ENCODE measurements at regions of chr12 and their contacts with region 1.

Region 1: DNA sequence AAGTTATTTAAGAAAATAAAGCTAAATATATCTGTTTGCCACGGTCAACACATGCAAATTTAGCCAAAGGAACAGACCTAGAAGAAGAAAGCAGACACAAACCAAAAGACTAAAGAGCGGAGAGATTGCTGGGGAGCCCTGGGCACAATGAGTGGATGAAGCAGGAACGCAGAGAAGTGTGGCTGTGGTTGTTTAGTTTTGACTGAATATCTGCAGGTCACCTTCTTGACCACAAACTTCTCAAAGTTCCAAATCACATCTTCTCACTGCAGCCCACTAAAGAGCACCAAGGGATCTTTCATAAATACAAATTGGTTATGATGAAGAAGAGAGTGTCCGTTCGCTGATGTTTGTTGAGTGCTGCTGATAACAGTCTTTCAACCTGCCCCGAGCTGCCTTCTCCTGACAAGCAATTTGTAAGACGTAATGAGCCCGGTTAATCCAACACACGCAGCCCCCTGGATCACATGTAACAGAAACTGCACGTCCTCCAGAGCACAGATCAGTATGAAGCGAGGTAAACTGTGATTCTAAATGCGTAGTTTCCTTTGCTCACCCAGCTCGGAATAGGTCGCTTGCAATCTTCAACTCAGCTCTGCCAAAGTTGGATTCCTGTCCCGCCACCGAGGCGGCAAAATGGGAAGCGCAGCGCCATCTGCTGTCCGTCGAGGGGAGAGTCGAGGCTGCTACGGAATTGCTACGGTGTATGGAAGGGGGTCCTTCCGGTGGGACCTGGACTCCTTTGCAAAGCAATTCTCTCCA is 120.8 kb downstream of the GXYLT1 start:
- DNase-seq: peak; percentile 81
- H3K4me3 ChIP-seq: peak overlapping the region in 2 of 3 experiments; percentile 31 to 58
- H3K27ac ChIP-seq: peak overlapping the region; percentile 30
- H3K4me1 ChIP-seq: peaks cover 23% of the 10 kb centered on the region
- H3K27me3 ChIP-seq: no peaks in the 10 kb centered on the region
- CTCF ChIP-seq: peak; percentile 93 to 96
- POLR2A ChIP-seq: no peak

Region 2: GRCh38 chr12:41190338-41190737 is 833.6 kb before region 1 on chr12:
- CTCF ChIA-PET with region 1: interaction called, 6 read pairs
- POLR2A ChIA-PET with region 1: no interaction called
- dilution Hi-C with region 1: no loop called
- intact Hi-C with region 1: loop called (anchors 2 kb)
- DNase-seq: peak; percentile 34
- H3K4me3 ChIP-seq: no peak overlapping the region
- H3K27ac ChIP-seq: no peak overlapping the region
- H3K4me1 ChIP-seq: peaks cover 4% of the 10 kb centered on the region
- H3K27me3 ChIP-seq: peaks cover 28 to 39% of the 10 kb centered on the region in 2 experiments
- CTCF ChIP-seq: peak; percentile 36 to 53
- POLR2A ChIP-seq: no peak

Region 3: DNA sequence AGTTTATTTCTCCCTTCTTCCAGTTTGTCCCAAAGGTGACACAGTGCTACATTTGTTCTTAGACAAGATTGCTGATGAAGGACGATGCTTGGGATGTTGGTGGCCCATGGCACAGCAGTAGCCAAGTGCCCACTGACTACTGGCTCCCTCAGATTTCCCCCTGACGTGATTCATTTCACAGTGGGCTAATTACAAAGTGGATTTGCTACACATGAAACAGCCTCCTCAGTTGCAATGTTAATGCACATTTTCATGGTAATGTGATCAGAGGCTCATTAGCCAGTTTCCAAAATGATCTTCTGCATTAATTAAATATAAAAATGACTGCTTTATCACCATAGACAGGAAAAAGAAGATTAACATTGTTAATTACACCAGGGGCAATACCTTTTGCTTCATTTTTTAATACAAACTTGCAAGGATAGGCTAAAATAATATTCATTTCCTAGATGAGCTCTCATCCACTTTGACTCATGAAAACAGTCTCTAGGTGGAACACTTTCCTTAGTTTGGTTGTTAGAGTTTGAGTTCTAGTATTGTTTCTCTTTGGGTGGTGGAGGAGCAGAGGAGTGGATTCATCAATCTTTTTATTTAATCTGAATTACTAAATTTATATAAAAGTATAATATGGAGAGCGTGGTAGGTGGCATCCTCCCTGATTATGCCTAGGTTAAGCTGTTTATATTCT is 584.9 kb before region 1 on chr12:
- CTCF ChIA-PET with region 1: interaction called, 18 read pairs
- POLR2A ChIA-PET with region 1: no interaction called
- dilution Hi-C with region 1: no loop called
- intact Hi-C with region 1: loop called (anchors 5 kb)
- DNase-seq: no peak
- H3K4me3 ChIP-seq: no peak overlapping the region
- H3K27ac ChIP-seq: no peak overlapping the region
- H3K4me1 ChIP-seq: no peaks in the 10 kb centered on the region
- H3K27me3 ChIP-seq: no peaks in the 10 kb centered on the region
- CTCF ChIP-seq: no peak
- POLR2A ChIP-seq: no peak

Region 4: GRCh38 chr12:41684997-41685396 is 338.9 kb before region 1 on chr12:
- CTCF ChIA-PET with region 1: interaction called, 8 read pairs
- POLR2A ChIA-PET with region 1: interaction called, 4 read pairs
- dilution Hi-C with region 1: no loop called
- intact Hi-C with region 1: loop called (anchors 1 kb)
- DNase-seq: no peak
- H3K4me3 ChIP-seq: no peak overlapping the region
- H3K27ac ChIP-seq: no peak overlapping the region
- H3K4me1 ChIP-seq: no peaks in the 10 kb centered on the region
- H3K27me3 ChIP-seq: peaks cover 0 to 7% of the 10 kb centered on the region in 2 experiments
- CTCF ChIP-seq: no peak
- POLR2A ChIP-seq: no peak

Region 5: DNA sequence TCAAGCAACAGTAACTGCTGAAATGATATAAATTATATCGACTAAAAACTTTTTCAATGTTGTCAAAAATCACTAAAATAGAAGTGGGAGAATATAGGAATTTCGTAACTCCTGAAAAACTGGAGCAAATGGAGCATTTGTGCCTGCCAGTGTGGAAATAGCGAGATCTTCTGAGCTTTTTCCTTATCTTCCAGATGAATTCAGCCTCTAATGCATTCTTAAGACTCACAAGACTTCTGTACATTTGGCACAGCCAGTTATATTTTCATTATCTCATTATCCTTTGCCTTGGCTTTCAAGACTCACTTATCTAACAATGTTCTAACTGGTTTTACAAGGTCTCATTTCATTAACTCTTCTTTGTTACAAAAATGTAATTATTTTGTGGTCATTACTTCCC is 131.6 kb before region 1 on chr12:
- CTCF ChIA-PET with region 1: no interaction called
- POLR2A ChIA-PET with region 1: no interaction called
- dilution Hi-C with region 1: no loop called
- intact Hi-C with region 1: no loop called
- DNase-seq: no peak
- H3K4me3 ChIP-seq: no peak overlapping the region
- H3K27ac ChIP-seq: no peak overlapping the region
- H3K4me1 ChIP-seq: no peaks in the 10 kb centered on the region
- H3K27me3 ChIP-seq: no peaks in the 10 kb centered on the region
- CTCF ChIP-seq: no peak
- POLR2A ChIP-seq: no peak

Region 6: DNA sequence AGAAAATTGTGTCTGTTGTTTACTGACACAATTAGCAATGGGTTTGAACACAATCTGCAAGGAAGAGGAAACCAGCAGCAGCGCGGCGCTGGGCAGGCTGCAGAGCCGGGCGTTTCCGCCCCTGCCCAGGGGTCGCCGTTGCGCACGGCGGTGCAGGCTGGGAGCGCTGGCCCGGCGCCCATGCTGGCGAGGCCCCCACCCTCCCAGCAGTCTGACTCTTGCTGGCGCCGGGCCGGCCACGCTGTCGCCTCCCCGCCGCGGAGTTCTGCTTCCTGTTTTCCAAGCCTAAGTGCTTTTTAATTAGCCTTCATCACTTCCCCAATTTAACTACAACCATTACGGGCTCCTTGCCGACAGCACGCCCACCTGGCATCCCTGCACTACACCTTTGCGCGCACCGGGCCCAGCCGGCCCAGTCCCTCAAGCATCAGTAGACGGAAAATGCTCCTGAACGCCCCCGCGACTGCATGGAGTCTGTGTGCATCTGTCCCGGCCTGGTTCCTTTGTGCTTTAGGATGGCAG is 91.4 kb before region 1 on chr12:
- CTCF ChIA-PET with region 1: interaction called, 13 read pairs
- POLR2A ChIA-PET with region 1: no interaction called
- dilution Hi-C with region 1: no loop called
- intact Hi-C with region 1: loop called (anchors 1 kb)
- DNase-seq: peak; percentile 90
- H3K4me3 ChIP-seq: peak overlapping the region; percentile 25 to 46 (median 26)
- H3K27ac ChIP-seq: peak overlapping the region; percentile 61
- H3K4me1 ChIP-seq: peaks cover 13% of the 10 kb centered on the region
- H3K27me3 ChIP-seq: no peaks in the 10 kb centered on the region
- CTCF ChIP-seq: no peak
- POLR2A ChIP-seq: no peak

Region 7: DNA sequence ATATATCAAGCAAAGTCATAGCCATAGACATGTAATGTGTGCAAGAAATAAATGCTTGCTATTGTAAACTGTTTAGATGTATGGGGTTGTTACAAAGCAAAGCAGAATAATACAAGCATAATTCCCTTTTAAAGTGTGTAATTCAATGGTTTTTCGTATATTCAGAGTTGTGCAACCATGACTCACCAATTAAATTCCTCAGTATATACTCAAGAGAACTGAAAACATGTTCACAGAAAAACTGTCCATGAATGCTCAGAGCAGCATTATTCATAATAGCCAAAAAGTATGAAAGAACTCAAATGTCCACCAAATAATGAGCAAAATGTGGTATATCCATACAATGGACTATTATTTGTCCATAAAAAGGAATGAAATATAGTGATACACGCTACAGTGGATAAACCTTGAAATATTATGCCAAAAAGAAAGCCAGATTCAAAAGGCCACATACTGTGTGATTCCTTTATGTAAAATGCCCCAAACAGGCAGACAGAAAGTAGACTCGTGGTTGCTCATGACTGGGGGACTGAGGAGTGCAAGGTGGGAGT is 111.4 kb after region 1 on chr12:
- CTCF ChIA-PET with region 1: no interaction called
- POLR2A ChIA-PET with region 1: no interaction called
- dilution Hi-C with region 1: no loop called
- intact Hi-C with region 1: no loop called
- DNase-seq: no peak
- H3K4me3 ChIP-seq: no peak overlapping the region
- H3K27ac ChIP-seq: no peak overlapping the region
- H3K4me1 ChIP-seq: peaks cover 12% of the 10 kb centered on the region
- H3K27me3 ChIP-seq: no peaks in the 10 kb centered on the region
- CTCF ChIP-seq: no peak
- POLR2A ChIP-seq: no peak

Region 8: DNA sequence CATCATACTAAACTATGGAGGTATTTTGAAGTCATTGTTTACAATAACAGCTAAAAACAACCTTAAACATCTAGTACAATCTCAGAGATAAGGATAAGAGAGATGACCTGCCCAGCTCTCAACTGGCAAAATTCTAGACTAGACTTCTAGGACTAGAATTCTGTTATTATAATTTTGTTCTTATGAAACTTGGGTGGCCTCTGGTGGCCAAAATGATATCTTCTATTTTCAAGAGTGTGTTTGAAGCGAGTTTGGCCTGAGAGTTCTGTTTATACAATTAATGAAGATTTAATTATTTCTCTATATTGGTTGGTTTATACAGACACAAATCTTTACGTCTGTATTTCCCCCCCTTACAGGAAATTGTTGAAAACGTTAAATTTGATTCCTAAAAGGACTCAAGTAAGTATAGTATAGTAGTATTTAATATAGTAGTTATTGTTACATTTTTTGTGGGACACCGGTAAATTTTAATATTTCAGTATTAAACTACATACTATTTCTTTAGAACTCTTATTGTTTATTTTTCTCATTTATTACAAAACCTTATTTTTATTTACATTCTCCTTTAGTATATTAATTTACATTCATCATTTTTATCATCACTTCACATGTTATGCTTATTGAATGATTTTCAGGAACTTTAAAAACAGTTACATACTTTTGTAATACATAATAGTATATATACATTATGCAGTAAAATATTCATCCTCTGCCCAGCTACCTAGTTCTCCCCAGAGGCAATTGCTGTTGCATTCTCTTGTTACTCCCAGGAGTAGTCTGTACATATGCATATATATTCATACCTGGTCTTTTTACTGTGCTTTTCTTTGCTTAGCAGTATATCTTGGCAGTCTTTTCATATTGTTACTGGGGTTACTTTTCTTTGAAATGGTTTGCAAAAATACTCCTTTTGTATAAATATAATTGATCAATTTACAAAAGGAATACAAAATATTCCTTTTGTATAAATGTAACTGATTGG is 308.7 kb after region 1 on chr12:
- CTCF ChIA-PET with region 1: interaction called, 10 read pairs
- POLR2A ChIA-PET with region 1: no interaction called
- dilution Hi-C with region 1: no loop called
- intact Hi-C with region 1: loop called (anchors 10 kb)
- DNase-seq: peak; percentile 67
- H3K4me3 ChIP-seq: no peak overlapping the region
- H3K27ac ChIP-seq: no peak overlapping the region
- H3K4me1 ChIP-seq: peaks cover 6% of the 10 kb centered on the region
- H3K27me3 ChIP-seq: no peaks in the 10 kb centered on the region
- CTCF ChIP-seq: peak; percentile 33 to 53
- POLR2A ChIP-seq: no peak